Activated naive CD4-positive, alpha-beta T cell treated with anti-CD3 and anti-CD28 coated beads for 36 hours (primary cell): ENCODE measurements at regions of chr11 and their contacts with region 1.

Region 1: GRCh38 chr11:13052130-13052605 is 43.1 kb downstream of the RASSF10 start:
- DNase-seq: no peak
- H3K4me3 Mint-ChIP-seq: no peak overlapping the region
- H3K27ac Mint-ChIP-seq: no peak overlapping the region
- H3K4me1 Mint-ChIP-seq: peaks cover 4% of the 10 kb centered on the region
- H3K27me3 Mint-ChIP-seq: peaks cover 12% of the 10 kb centered on the region

Region 2: DNA sequence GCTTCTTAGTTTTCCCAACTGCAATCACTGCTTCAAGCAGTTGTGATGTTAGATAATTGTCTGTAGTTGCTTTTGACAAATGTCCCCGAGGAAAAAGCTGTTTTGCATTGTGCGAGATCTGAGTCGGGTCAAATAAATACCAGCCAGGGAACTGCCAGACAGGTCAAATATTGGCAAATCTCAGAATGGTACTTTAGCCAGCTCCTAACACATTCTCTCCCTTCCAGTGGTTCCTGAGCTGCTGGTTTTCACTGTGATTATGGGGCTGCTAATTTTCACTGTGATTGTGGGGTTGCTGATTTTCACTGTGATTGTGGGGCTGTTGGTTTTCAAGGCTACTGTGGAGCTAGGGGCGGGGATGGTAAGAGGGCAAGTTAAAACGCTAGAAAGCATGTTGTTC is 28.7 kb before region 1 on chr11:
- CTCF ChIA-PET with region 1: no interaction called
- intact Hi-C with region 1: loop called (anchors 1 kb)
- DNase-seq: no peak
- H3K4me3 Mint-ChIP-seq: no peak overlapping the region
- H3K27ac Mint-ChIP-seq: no peak overlapping the region
- H3K4me1 Mint-ChIP-seq: no peaks in the 10 kb centered on the region
- H3K27me3 Mint-ChIP-seq: peaks cover 20% of the 10 kb centered on the region